ENCODE measurements at regions of chr7 and their contacts with region 1.

Region 1: GRCh38 chr7:40329601-40330153 is 194.9 kb downstream of the SUGCT start:
- DNase-seq: peak in 1 of 2 experiments; percentile 42
- H3K4me3 ChIP-seq: no peak overlapping the region
- H3K4me3 Mint-ChIP-seq: no peak overlapping the region
- H3K27ac Mint-ChIP-seq: no peak overlapping the region
- H3K4me1 ChIP-seq: no peaks in the 10 kb centered on the region
- H3K4me1 Mint-ChIP-seq: no peaks in the 10 kb centered on the region
- H3K27me3 ChIP-seq: no peaks in the 10 kb centered on the region
- H3K27me3 Mint-ChIP-seq: no peaks in the 10 kb centered on the region
- CTCF ChIP-seq: peak; percentile 60 to 71

Region 2: GRCh38 chr7:40232242-40232893 is 97.3 kb before region 1 on chr7:
- CTCF ChIA-PET with region 1: interaction called, 8 read pairs
- POLR2A ChIA-PET with region 1: no interaction called
- intact Hi-C with region 1: loop called (anchors 2 kb)
- DNase-seq: peak in 1 of 2 experiments; percentile 42
- H3K4me3 ChIP-seq: no peak overlapping the region
- H3K4me3 Mint-ChIP-seq: no peak overlapping the region
- H3K27ac Mint-ChIP-seq: no peak overlapping the region
- H3K4me1 ChIP-seq: peaks cover 7% of the 10 kb centered on the region; the same call in 1 of the 2 replicates
- H3K4me1 Mint-ChIP-seq: no peaks in the 10 kb centered on the region
- H3K27me3 ChIP-seq: no peaks in the 10 kb centered on the region
- H3K27me3 Mint-ChIP-seq: no peaks in the 10 kb centered on the region
- CTCF ChIP-seq: peak; percentile 52 to 60

Region 3: DNA sequence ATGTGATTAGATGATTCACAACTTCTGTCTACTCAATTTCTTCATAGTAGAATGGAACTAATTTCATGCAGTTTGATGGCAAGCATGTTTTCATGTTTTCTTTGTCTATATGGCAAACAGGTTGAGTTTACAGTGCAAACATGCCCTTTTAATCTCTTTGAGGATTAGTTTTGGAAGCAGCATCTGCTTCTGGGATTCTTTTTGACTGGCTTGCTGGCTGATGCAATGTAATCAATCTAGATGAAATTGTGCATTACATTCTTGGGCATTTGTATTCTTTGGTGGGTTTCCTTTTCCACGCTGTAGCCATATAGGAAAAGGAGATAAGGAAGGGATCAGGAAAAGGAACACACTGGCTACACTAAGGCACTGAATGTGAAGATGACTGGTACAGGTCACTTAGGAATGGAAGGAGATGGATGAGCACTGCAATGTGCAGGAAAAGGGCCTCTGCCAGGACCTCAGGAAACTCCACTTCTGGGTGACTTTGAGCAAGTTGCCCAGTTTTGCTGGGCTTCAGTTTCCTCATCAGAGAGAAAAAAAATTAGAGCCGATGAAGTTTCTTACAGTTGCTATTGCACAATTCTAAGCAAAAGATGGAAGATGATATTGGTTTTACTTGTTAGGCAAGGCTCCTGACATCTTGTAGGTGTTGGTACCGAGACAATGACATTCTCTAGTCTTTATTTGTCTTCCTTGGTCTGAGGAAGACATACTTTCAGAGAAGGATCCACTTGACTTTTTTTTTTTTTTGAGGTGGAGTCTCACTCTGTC is 74.2 kb after region 1 on chr7:
- CTCF ChIA-PET with region 1: no interaction called
- POLR2A ChIA-PET with region 1: no interaction called
- intact Hi-C with region 1: no loop called
- DNase-seq: peak in 1 of 2 experiments; percentile 32
- H3K4me3 ChIP-seq: no peak overlapping the region
- H3K4me3 Mint-ChIP-seq: no peak overlapping the region
- H3K27ac Mint-ChIP-seq: peak overlapping the region; percentile 48
- H3K4me1 ChIP-seq: no peaks in the 10 kb centered on the region
- H3K4me1 Mint-ChIP-seq: peaks cover 13% of the 10 kb centered on the region
- H3K27me3 ChIP-seq: no peaks in the 10 kb centered on the region
- H3K27me3 Mint-ChIP-seq: no peaks in the 10 kb centered on the region
- CTCF ChIP-seq: no peak

Region 4: DNA sequence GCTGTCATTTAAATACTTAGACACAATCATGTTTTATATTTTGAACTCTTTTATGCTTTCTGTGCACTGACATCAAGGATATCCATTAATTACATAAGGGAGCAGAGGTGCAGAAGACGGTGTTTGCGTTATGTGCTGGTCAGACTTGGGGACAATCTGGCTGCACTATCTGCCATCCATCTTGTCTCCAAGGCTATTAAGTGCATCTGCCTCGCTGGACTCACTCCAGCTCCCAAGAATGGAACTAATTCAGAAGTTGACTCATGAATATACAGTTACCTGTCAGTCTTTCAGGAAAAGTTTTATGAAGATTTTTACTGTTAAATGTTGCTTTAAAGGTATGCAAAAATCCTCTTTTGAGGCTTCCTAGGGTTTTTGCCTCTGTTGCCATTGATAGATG is 196.1 kb after region 1 on chr7:
- CTCF ChIA-PET with region 1: no interaction called
- POLR2A ChIA-PET with region 1: no interaction called
- intact Hi-C with region 1: loop called (anchors 5 kb)
- DNase-seq: no peak
- H3K4me3 ChIP-seq: no peak overlapping the region
- H3K4me3 Mint-ChIP-seq: no peak overlapping the region
- H3K27ac Mint-ChIP-seq: no peak overlapping the region
- H3K4me1 ChIP-seq: no peaks in the 10 kb centered on the region
- H3K4me1 Mint-ChIP-seq: no peaks in the 10 kb centered on the region
- H3K27me3 ChIP-seq: no peaks in the 10 kb centered on the region
- H3K27me3 Mint-ChIP-seq: peaks cover 3% of the 10 kb centered on the region
- CTCF ChIP-seq: no peak

Region 5: DNA sequence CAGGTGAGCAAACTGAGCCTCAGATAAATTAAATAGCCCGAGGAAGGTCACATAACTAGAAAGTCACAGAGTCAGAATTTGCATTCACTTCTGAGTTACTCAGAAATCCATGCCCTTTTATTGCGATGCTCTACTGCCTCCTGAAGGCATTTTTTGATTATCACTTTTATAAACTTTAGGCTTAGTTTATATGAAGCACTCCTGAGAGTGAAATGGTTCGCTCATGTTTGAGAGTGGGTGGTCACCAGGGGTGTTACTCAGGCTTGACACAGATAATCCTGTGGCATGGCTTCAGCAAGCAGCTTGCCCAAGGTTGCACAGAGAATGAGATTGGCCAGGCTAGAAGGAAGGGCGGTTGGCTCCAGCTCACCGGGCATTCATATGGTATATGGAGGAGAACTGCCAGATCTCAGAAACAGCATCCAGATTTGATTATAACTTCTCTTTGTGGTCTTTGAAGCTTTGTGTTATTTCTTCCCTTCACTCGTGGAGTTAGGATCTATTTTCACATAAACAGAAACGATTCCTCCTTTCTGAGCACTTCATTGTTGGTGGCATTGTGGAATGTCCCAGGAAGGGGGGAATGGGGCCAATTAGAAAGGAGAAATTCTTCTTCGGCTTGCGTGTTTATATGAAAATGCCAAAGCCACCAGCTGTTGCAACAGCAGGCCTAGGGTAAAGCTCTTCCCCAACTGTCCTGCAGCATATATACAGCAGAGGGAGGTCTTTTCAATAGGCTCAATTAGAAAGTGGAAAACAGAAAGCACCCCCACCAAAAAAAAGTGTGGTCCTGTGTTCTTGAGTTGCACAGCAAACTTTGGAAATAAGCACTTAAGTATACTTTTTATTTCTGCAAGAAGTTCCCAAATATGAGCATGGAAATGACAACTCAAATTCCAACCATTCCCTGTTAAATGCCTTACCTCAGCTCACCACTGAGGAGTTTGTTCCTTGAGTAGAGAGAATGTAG is 433.9 kb after region 1 on chr7:
- CTCF ChIA-PET with region 1: no interaction called
- POLR2A ChIA-PET with region 1: no interaction called
- intact Hi-C with region 1: loop called (anchors 5 kb)
- DNase-seq: no peak
- H3K4me3 ChIP-seq: no peak overlapping the region
- H3K4me3 Mint-ChIP-seq: no peak overlapping the region
- H3K27ac Mint-ChIP-seq: no peak overlapping the region
- H3K4me1 ChIP-seq: peaks cover 4% of the 10 kb centered on the region; the same call in 1 of the 2 replicates
- H3K4me1 Mint-ChIP-seq: no peaks in the 10 kb centered on the region
- H3K27me3 ChIP-seq: no peaks in the 10 kb centered on the region
- H3K27me3 Mint-ChIP-seq: no peaks in the 10 kb centered on the region
- CTCF ChIP-seq: peak in 1 of 2 experiments; percentile 13

Region 6: DNA sequence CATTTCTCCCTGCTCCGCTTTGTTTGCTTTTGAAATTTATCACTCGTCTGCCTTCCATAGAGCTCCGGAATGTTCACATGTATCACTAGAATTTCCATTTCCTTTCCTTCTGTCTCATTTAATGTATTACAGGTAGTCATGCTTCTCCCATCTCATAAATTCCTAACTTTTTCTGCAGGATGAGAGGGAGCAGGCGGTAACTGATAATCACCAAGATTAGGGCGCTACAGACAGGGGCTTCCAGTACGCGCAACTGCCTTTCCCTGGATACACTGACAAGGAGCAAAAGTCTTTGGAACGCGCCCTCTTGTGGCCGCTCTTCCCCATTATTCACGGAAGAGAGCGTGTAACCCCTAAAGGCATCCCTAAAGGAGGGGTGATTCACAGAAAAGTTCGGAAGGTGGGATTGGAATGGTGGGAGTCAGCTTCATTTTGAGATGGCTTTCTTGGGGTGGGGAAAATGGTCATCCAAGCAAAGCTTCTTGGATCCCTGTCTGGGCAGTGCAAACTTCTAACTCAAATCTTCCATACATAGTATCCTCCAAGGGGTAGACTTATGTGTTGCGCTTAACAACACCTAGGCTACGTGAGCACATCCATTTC is 1366.7 kb after region 1 on chr7:
- CTCF ChIA-PET with region 1: no interaction called
- POLR2A ChIA-PET with region 1: no interaction called
- intact Hi-C with region 1: loop called (anchors 1 kb)
- DNase-seq: peak; percentile 73
- H3K4me3 ChIP-seq: peak overlapping the region; percentile 13
- H3K4me3 Mint-ChIP-seq: peak overlapping the region; percentile 71
- H3K27ac Mint-ChIP-seq: peak overlapping the region; percentile 25
- H3K4me1 ChIP-seq: peaks cover 3% of the 10 kb centered on the region; the same call in 1 of the 2 replicates
- H3K4me1 Mint-ChIP-seq: peaks cover 19% of the 10 kb centered on the region
- H3K27me3 ChIP-seq: no peaks in the 10 kb centered on the region
- H3K27me3 Mint-ChIP-seq: peaks cover 3% of the 10 kb centered on the region
- CTCF ChIP-seq: peak; percentile 83 to 89